ENCODE measurements at regions of chr1 and their contacts with region 1.

Region 1: GRCh38 chr1:153049211-153049610 is 8.1 kb downstream of the SPRR2A start:
- DNase-seq: no peak
- H3K4me3 Mint-ChIP-seq: no peak overlapping the region
- H3K27ac Mint-ChIP-seq: no peak overlapping the region
- H3K4me1 Mint-ChIP-seq: peaks cover 14% of the 10 kb centered on the region
- H3K27me3 Mint-ChIP-seq: no peaks in the 10 kb centered on the region
- CTCF ChIP-seq: no peak

Region 2: GRCh38 chr1:152566681-152567080 is 482.5 kb before region 1 on chr1 and contains the start of gene LCE3E:
- CTCF ChIA-PET with region 1: no interaction called
- POLR2A ChIA-PET with region 1: no interaction called
- intact Hi-C with region 1: no loop called
- DNase-seq: peak; percentile 24
- H3K4me3 Mint-ChIP-seq: no peak within 1 kb of the TSS
- H3K27ac Mint-ChIP-seq: no peak within 1 kb of the TSS
- H3K4me1 Mint-ChIP-seq: peaks cover 8% of the 10 kb centered on the region
- H3K27me3 Mint-ChIP-seq: no peaks in the 10 kb centered on the region
- CTCF ChIP-seq: no peak
- total RNA-seq, gene LCE3E: not detected in 2 replicates

Region 3: GRCh38 chr1:152823291-152823690 is 225.9 kb before region 1 on chr1:
- CTCF ChIA-PET with region 1: no interaction called
- POLR2A ChIA-PET with region 1: no interaction called
- intact Hi-C with region 1: no loop called
- DNase-seq: no peak
- H3K4me3 Mint-ChIP-seq: no peak overlapping the region
- H3K27ac Mint-ChIP-seq: no peak overlapping the region
- H3K4me1 Mint-ChIP-seq: no peaks in the 10 kb centered on the region
- H3K27me3 Mint-ChIP-seq: peaks cover 10% of the 10 kb centered on the region
- CTCF ChIP-seq: no peak

Region 4: GRCh38 chr1:152932170-152932811 is 116.9 kb before region 1 on chr1:
- CTCF ChIA-PET with region 1: no interaction called
- POLR2A ChIA-PET with region 1: interaction called, 10 read pairs
- intact Hi-C with region 1: no loop called
- DNase-seq: peak; percentile 89
- H3K4me3 Mint-ChIP-seq: no peak overlapping the region
- H3K27ac Mint-ChIP-seq: peak overlapping the region; percentile 14
- H3K4me1 Mint-ChIP-seq: peaks cover 25% of the 10 kb centered on the region
- H3K27me3 Mint-ChIP-seq: no peaks in the 10 kb centered on the region
- CTCF ChIP-seq: no peak

Region 5: GRCh38 chr1:152993186-152993585 is 56.0 kb before region 1 on chr1:
- CTCF ChIA-PET with region 1: no interaction called
- POLR2A ChIA-PET with region 1: no interaction called
- intact Hi-C with region 1: no loop called
- DNase-seq: no peak
- H3K4me3 Mint-ChIP-seq: no peak overlapping the region
- H3K27ac Mint-ChIP-seq: no peak overlapping the region
- H3K4me1 Mint-ChIP-seq: no peaks in the 10 kb centered on the region
- H3K27me3 Mint-ChIP-seq: no peaks in the 10 kb centered on the region
- CTCF ChIP-seq: no peak